B cell (primary cell): ENCODE measurements at regions of chr4 and their contacts with region 1.

Region 1: DNA sequence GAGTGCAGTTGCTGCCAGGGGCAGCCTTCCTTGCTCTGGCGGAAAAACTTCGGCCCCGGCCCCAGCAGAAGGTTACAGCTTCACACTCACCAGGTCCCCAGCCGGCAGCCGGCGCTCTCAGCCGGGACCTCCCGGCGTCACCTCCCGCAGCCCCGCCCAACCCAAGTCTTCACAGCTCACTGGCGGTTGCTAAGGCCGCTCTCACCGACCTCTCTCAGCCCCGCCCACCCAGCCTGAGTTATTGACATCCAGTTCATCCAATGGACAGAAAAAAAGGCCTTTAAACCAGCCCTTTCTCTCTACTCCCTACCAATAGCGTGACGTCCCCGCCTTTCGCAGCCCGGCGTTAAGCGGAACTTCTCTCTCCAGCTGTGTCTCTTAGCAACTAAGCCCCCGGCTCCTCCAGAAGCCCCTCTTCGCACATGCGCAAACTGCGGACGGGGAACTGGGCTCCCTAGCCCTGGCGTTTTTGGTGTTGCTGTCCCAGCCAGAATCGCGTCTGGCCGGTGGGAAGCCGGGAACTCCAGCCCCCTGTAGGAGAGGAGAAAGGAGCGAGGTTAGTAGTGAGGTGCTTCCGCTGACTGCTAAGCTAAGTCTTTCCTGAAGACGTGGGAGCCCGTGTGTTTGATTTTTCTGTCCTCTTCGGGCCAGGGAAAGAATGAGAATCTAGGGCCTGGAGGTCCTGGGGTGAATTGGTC is at the start of gene BBS12:
- DNase-seq: peak; percentile 100
- ATAC-seq: peak; percentile 97
- H3K4me3 ChIP-seq: peak within 1 kb of the TSS; percentile 71 to 97 (median 84)
- H3K4me3 Mint-ChIP-seq: peak within 1 kb of the TSS; percentile 95
- H3K27ac ChIP-seq: peak within 1 kb of the TSS; percentile 87 to 92
- H3K27ac Mint-ChIP-seq: peak within 1 kb of the TSS; percentile 97
- H3K4me1 ChIP-seq: peaks cover 13 to 17% of the 10 kb centered on the region in 2 donors
- H3K4me1 Mint-ChIP-seq: peaks cover 15% of the 10 kb centered on the region
- H3K27me3 ChIP-seq: no peaks in the 10 kb centered on the region
- H3K27me3 Mint-ChIP-seq: no peaks in the 10 kb centered on the region
- CTCF ChIP-seq: no peak
- total RNA-seq, gene BBS12: 2.9 and 3.4 TPM in 2 replicates

Region 2: GRCh38 chr4:121800961-121801714 is 931.3 kb before region 1 on chr4 and contains the start of gene EXOSC9:
- CTCF ChIA-PET with region 1: no interaction called
- POLR2A ChIA-PET with region 1: no interaction called
- intact Hi-C with region 1: loop called (anchors 5 kb)
- DNase-seq: peak; percentile 97
- ATAC-seq: peak; percentile 76
- H3K4me3 ChIP-seq: peak within 1 kb of the TSS; percentile 64 to 99 (median 93)
- H3K4me3 Mint-ChIP-seq: peak within 1 kb of the TSS; percentile 96
- H3K27ac ChIP-seq: peak within 1 kb of the TSS; percentile 88 to 97
- H3K27ac Mint-ChIP-seq: peak within 1 kb of the TSS; percentile 98
- H3K4me1 ChIP-seq: peaks cover 8 to 15% of the 10 kb centered on the region in 2 donors
- H3K4me1 Mint-ChIP-seq: peaks cover 39% of the 10 kb centered on the region
- H3K27me3 ChIP-seq: no peaks in the 10 kb centered on the region
- H3K27me3 Mint-ChIP-seq: no peaks in the 10 kb centered on the region
- CTCF ChIP-seq: no peak
- total RNA-seq, gene EXOSC9: 35.5 and 42.1 TPM in 2 replicates

Region 3: DNA sequence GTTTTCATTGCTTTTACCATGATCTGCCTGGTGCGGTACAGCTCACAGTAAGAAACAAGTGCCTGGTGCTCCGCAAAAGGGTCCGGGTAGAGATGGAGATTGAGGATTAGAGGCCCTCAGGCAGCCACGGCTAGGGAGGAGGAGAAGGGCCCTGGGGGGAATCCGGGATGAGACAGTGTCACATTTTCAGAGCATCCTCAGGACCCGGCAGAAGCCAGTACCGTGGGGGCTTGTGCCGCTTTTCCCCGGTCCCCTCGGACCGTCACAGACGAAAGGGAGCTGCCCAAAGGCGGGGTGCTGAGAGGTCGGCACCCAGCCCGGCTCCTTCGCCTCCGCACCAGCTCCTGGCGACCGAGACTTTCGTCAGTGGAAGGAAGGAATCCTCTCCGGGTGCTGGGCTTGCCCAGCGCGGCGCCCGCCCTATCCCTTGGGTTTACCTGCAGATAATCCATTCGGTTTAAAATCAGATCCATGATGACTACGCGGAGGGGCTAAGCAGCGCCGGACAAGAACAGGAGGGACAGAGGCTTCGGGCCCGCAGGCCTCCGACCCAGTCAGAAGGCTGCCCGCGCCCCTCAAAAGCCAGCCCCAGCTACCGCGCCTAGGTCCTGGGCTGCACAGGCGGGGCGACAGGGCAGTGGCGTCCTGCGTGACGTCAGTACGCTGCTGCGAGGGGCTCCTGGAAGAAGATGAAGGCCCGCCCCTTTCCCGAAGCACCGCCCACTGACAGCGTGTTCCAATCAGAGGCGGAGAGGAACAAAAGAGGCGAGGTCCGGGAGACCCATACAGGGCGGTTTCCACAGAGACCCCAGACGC is 862.4 kb before region 1 on chr4 and contains the start of gene BBS7:
- CTCF ChIA-PET with region 1: no interaction called
- POLR2A ChIA-PET with region 1: no interaction called
- intact Hi-C with region 1: loop called (anchors 1 kb)
- DNase-seq: peak; percentile 96
- ATAC-seq: peak; percentile 98
- H3K4me3 ChIP-seq: peak within 1 kb of the TSS; percentile 70 to 91 (median 80)
- H3K4me3 Mint-ChIP-seq: peak within 1 kb of the TSS; percentile 98
- H3K27ac ChIP-seq: peak within 1 kb of the TSS; percentile 45 to 80
- H3K27ac Mint-ChIP-seq: peak within 1 kb of the TSS; percentile 88
- H3K4me1 ChIP-seq: peaks cover 0 to 10% of the 10 kb centered on the region in 2 donors
- H3K4me1 Mint-ChIP-seq: peaks cover 17% of the 10 kb centered on the region
- H3K27me3 ChIP-seq: peaks cover 0 to 17% (median 4%) of the 10 kb centered on the region in 4 experiments
- H3K27me3 Mint-ChIP-seq: peaks cover 14% of the 10 kb centered on the region
- CTCF ChIP-seq: no peak
- total RNA-seq, gene BBS7: 9.1 and 11.9 TPM in 2 replicates

Region 4: DNA sequence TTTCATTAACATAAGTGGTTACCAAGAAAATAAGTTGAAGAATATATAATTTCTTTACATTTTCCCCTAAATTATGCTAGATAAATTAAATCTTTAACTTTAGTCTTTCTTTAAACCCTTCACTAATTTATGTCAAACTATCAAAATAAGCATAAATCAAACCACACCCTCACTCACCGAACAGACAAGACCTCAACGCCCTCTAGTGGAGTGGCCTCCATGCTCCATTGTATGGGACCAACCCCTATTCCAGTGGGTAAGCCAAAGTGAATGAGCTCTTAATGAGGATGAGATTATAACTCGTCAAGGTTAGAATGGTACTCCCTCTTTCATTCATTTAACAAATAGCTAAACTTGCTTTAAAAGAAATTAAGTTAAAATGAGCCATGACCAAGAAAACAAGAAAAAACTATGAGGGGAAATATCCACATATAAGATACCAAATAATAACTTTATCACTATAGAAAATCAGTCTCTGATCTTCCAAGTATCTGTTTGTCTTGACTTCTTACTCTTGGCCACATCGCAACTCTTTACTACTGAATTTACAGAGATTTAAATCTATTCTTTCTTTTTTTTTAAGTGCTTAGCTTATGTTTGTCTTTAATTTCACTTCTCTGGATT is 15.5 kb before region 1 on chr4:
- CTCF ChIA-PET with region 1: interaction called, 21 read pairs
- POLR2A ChIA-PET with region 1: no interaction called
- intact Hi-C with region 1: loop called (anchors 2 kb)
- DNase-seq: peak; percentile 63
- ATAC-seq: peak; percentile 73
- H3K4me3 ChIP-seq: no peak overlapping the region
- H3K4me3 Mint-ChIP-seq: no peak overlapping the region
- H3K27ac ChIP-seq: no peak overlapping the region
- H3K27ac Mint-ChIP-seq: no peak overlapping the region
- H3K4me1 ChIP-seq: no peaks in the 10 kb centered on the region
- H3K4me1 Mint-ChIP-seq: no peaks in the 10 kb centered on the region
- H3K27me3 ChIP-seq: peaks cover 0 to 3% (median 0%) of the 10 kb centered on the region in 4 experiments
- H3K27me3 Mint-ChIP-seq: peaks cover 15% of the 10 kb centered on the region
- CTCF ChIP-seq: peak; percentile 76

Region 5: DNA sequence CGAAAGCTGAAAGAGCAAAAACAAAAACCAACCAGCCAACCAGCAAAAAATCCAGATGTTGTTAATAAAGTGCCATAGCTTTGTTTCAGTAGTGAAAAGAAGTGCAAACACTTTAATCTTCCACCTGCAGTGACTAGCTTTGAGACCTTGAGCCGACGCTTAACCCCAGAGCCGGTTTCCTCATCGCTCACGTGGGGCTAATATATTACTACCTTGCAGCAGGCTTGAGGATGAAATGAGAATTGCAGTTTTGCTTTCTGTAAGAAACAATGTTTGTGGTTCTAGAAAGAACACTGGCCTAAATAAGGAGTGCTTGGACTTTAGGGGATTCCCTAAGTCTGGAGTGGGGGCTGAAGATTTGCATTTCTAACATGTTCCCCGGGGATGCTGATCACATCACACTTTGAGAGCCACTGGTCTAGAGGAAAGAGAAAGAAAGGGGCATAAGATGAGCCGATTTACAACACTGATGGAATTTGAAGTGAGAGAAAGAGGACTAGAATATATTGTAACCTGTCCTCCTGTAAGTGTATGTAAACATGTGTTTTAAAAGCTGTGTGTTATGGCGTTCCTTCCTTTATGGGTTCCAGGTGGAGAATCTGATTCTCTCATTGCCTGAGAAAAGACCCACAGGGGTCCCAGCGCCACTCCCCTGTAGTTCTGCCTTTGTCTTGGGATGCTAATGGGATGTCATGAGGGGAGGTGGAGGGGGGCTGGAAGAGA is 95.6 kb after region 1 on chr4:
- CTCF ChIA-PET with region 1: no interaction called
- POLR2A ChIA-PET with region 1: no interaction called
- intact Hi-C with region 1: loop called (anchors 2 kb)
- DNase-seq: peak; percentile 67
- ATAC-seq: peak; percentile 59
- H3K4me3 ChIP-seq: peak overlapping the region; percentile 47 to 73 (median 58)
- H3K4me3 Mint-ChIP-seq: peak overlapping the region; percentile 87
- H3K27ac ChIP-seq: no peak overlapping the region
- H3K27ac Mint-ChIP-seq: peak overlapping the region; percentile 47
- H3K4me1 ChIP-seq: peaks cover 17 to 18% of the 10 kb centered on the region in 2 donors
- H3K4me1 Mint-ChIP-seq: peaks cover 19% of the 10 kb centered on the region
- H3K27me3 ChIP-seq: peaks cover 3 to 55% (median 43%) of the 10 kb centered on the region in 4 experiments
- H3K27me3 Mint-ChIP-seq: peaks cover 80% of the 10 kb centered on the region
- CTCF ChIP-seq: peak; percentile 17

Region 6: DNA sequence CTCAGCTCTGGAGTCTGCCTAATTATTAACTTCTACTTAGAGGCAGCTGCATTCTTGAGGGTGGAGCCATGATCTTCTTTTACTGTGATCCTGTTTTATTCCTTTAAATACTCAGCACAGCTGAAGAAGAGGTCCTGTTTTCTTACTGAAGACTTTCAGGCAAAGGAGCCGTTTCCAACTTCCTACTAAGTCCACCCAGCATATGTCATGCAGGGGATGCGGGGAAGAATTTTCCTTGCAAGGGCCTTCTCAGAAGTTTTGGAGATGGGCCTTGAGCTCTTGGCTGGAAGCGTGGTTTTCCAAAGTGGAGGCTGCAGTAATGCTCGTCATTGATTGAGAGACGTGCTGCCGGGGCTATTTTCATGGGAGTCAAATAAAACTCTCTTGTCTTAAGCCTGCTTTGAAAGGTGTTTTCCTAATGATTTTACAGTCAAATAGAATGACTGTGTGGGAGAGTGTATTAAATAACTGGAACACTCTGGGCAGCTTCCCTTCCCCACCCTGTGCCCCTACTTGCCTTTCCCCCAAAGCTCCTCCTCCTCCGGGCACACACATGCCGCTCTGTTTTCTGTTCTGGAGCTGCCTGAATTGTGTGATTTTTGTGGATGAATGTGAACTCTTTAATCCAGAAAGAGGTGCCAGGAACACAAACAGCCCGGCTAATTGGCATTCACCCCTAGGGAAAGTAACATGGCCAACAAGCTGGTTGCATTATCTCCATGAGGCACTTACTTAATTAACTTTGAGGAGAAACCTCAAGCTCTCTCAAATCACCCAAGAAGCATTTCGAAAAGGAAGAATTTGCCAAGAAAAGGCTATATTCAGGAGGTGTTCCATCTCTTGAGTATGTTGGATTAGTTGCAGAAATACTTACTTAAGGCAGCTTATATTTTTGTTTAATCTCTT is 122.2 kb after region 1 on chr4:
- CTCF ChIA-PET with region 1: no interaction called
- POLR2A ChIA-PET with region 1: no interaction called
- intact Hi-C with region 1: no loop called
- DNase-seq: no peak
- ATAC-seq: no peak
- H3K4me3 ChIP-seq: no peak overlapping the region
- H3K4me3 Mint-ChIP-seq: no peak overlapping the region
- H3K27ac ChIP-seq: no peak overlapping the region
- H3K27ac Mint-ChIP-seq: no peak overlapping the region
- H3K4me1 ChIP-seq: no peaks in the 10 kb centered on the region
- H3K4me1 Mint-ChIP-seq: no peaks in the 10 kb centered on the region
- H3K27me3 ChIP-seq: peaks cover 0 to 3% (median 0%) of the 10 kb centered on the region in 4 experiments
- H3K27me3 Mint-ChIP-seq: peaks cover 27% of the 10 kb centered on the region
- CTCF ChIP-seq: no peak

Region 7: GRCh38 chr4:122930862-122931261 is 198.4 kb after region 1 on chr4:
- CTCF ChIA-PET with region 1: interaction called, 12 read pairs
- POLR2A ChIA-PET with region 1: no interaction called
- intact Hi-C with region 1: no loop called
- DNase-seq: peak; percentile 27
- ATAC-seq: no peak
- H3K4me3 ChIP-seq: no peak overlapping the region
- H3K4me3 Mint-ChIP-seq: no peak overlapping the region
- H3K27ac ChIP-seq: no peak overlapping the region
- H3K27ac Mint-ChIP-seq: no peak overlapping the region
- H3K4me1 ChIP-seq: no peaks in the 10 kb centered on the region
- H3K4me1 Mint-ChIP-seq: no peaks in the 10 kb centered on the region
- H3K27me3 ChIP-seq: no peaks in the 10 kb centered on the region
- H3K27me3 Mint-ChIP-seq: no peaks in the 10 kb centered on the region
- CTCF ChIP-seq: peak; percentile 78